GM10248 (cell line): ENCODE measurements at regions of chr2 and their contacts with region 1.

Region 1: DNA sequence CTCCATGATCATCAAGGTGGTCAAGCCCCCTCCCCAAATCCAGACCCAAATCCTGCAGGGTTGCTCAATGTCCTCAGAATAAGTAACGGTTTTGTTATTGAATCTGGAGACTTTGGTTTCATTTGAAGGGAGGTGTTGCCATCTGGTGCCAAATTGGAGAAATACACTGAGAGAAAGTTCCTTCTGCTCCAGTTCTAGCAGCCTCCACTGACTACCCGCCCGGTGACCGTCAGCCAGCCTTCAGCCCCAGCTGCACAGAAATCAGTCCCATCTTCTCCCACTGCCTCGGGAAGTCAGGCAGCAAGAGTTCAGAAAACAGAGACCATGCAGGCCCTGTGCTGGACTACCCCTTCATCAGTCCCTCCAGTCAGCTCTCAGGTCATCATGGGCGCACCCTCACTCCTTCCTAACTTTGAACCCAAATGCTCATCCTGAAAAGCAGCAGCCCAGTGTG is 38.7 kb downstream of the PKDCC start:
- DNase-seq: peak; percentile 71
- CTCF ChIP-seq: peak; percentile 62

Region 2: GRCh38 chr2:41840702-41841551 is 245.6 kb before region 1 on chr2:
- CTCF ChIA-PET with region 1: interaction called, 420 read pairs
- POLR2A ChIA-PET with region 1: no interaction called
- DNase-seq: peak; percentile 94
- CTCF ChIP-seq: peak; percentile 99

Region 3: DNA sequence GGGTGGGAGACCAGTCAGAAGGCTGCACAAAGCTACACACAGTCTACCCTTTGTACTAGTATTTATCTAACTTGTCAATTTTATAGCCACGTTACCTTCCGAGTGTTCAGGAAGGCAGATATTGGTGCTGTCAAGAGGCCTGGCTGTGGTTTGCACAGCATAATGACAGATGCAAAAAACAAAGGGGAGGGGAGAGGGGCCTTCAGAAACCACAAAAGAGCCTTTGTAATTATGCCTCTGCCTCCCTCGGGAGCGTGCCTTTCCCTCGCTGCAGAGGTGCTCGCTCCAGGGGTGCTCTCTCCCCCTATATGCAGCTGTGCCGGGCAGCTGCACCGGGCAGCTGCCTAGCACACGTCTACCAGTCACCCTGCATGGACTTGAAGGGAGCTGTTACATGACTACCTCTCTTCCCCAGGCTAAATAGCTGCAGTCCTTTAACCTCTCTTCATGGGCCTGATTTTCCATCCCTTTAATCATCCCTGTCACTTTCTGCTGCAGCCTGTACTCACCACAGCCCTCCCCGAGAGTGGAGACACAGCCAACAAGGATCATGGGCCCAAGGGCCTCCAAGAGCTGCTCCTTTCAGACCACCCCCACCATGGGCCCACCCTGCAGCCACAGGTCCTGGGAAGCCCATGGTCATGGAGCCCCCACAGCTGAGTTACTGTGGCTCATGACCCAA is 207.2 kb before region 1 on chr2:
- CTCF ChIA-PET with region 1: interaction called, 651 read pairs
- POLR2A ChIA-PET with region 1: no interaction called
- DNase-seq: no peak
- CTCF ChIP-seq: no peak

Region 4: GRCh38 chr2:41896186-41896846 is 190.2 kb before region 1 on chr2:
- CTCF ChIA-PET with region 1: interaction called, 10 read pairs
- POLR2A ChIA-PET with region 1: no interaction called
- DNase-seq: no peak
- CTCF ChIP-seq: no peak

Region 5: DNA sequence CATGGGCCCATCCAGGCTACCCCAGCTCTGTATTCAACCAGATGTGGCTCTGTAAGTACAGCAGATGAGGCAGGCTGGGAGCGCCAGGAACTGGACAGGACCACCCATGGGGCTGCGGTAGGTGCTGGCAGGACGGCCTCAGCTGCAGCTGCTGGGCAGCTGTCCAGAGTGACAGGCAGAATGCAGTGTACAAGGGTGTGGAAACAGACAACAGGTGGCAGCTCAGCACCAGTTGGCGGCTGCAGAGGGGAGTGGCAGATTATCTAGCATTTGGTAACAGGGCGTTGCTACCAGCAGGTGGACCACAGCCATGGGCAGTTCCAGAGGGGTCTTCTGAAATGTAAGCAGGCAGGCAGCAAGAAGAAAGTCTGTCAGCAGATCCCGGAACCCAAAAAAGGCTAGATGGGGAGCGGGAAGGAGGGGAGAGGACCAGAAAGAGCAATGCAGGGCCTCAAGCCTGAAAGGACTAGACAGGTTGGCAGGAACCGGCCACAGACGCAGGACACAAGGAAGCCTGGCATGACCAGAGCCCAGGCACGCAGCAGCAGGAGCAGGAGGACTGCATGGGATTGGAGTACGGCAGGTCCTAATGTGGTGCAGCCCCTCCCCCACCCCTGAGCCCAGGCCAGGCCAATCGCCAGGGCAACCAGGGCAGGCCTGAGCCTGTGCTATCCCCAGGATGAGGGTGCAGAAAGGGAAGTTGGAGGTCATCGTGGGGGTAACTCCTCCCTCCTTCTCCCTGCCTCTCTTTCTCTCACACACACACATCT is 14.0 kb before region 1 on chr2:
- CTCF ChIA-PET with region 1: interaction called, 16 read pairs
- POLR2A ChIA-PET with region 1: no interaction called
- DNase-seq: no peak
- CTCF ChIP-seq: no peak

Region 6: GRCh38 chr2:42328148-42328833 is 241.8 kb after region 1 on chr2:
- CTCF ChIA-PET with region 1: interaction called, 15 read pairs
- POLR2A ChIA-PET with region 1: no interaction called
- DNase-seq: no peak
- CTCF ChIP-seq: peak; percentile 44